Naive thymus-derived CD4-positive, alpha-beta T cell (primary cell): ENCODE measurements at regions of chr1 and their contacts with region 1.

Region 1: DNA sequence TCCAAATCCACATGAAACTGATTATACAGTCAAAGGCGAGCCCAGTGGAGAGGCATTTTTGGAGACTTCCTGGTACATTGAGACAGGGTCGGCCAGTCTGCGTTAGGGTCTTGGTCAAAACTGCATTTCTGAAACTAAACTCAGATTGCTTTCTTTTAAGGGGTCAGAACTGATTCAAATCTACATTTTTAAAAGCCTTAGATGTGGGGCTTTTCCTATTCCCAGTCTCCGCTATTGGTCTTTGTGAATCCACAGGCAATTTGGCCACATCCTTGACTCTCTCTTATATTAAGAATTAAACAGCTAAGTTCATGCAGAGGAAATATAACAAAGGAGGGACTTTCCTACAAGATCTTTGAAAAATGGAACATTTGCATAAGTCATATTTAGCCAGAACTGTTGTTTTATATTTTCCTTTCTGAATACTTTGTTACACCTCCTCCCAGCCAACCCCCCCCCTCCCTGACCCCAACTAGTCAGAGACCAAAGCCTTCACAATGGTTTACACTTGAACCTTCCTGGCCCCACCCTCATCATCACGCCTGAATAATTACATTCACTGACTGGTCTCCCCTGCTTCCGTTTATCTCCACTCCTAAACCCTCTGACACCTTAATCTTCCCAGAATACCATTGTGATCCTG is 30.9 kb downstream of the SELL start:
- DNase-seq: peak in 1 of 9 donors; percentile 38
- ATAC-seq: peak; percentile 49
- H3K4me3 ChIP-seq: no peak overlapping the region
- H3K4me3 Mint-ChIP-seq: peak overlapping the region; percentile 23 to 72 (median 53)
- H3K27ac ChIP-seq: no peak overlapping the region
- H3K27ac Mint-ChIP-seq: peak overlapping the region in 7 of 9 donors; percentile 40 to 89 (median 73)
- H3K4me1 ChIP-seq: peaks cover 24 to 72% of the 10 kb centered on the region in 2 donors
- H3K4me1 Mint-ChIP-seq: peaks cover 28 to 64% (median 39%) of the 10 kb centered on the region in 7 donors
- H3K27me3 ChIP-seq: no peaks in the 10 kb centered on the region
- H3K27me3 Mint-ChIP-seq: no peaks in the 10 kb centered on the region

Region 2: GRCh38 chr1:169648709-169649108 is 31.8 kb before region 1 on chr1:
- CTCF ChIA-PET with region 1: no interaction called
- POLR2A ChIA-PET with region 1: interaction called, 6 read pairs
- intact Hi-C with region 1: loop called in 1 of 2 experiments (anchors 1 kb)
- DNase-seq: no peak
- ATAC-seq: no peak
- H3K4me3 ChIP-seq: no peak overlapping the region
- H3K4me3 Mint-ChIP-seq: peak overlapping the region in 8 of 10 donors; percentile 10 to 74 (median 62)
- H3K27ac ChIP-seq: peak overlapping the region; percentile 17
- H3K27ac Mint-ChIP-seq: peak overlapping the region in 8 of 9 donors; percentile 65 to 94 (median 88)
- H3K4me1 ChIP-seq: peaks cover 14 to 28% of the 10 kb centered on the region in 2 donors
- H3K4me1 Mint-ChIP-seq: peaks cover 18 to 55% (median 46%) of the 10 kb centered on the region in 7 donors
- H3K27me3 ChIP-seq: no peaks in the 10 kb centered on the region
- H3K27me3 Mint-ChIP-seq: no peaks in the 10 kb centered on the region

Region 3: DNA sequence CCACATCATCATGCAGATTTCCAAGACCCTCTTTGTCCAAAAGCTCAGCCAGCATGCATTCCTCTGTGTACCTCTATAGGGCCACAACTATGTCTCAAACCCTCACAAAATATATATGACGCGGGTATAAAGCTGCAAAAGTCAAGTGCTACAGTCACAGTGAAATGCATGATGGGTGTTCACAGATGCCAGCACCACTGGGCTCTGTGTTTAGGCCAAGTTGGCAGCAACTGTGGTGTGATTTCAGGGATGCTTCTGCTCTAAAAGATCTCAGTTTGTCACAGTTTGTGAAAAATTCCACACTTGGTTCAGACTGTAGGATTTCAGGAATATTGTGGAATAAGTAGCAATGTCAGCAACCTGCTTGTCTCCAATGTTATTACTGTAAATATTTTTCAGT is 26.6 kb before region 1 on chr1:
- CTCF ChIA-PET with region 1: no interaction called
- POLR2A ChIA-PET with region 1: interaction called, 6 read pairs
- intact Hi-C with region 1: loop called in 1 of 2 experiments (anchors 1 kb)
- DNase-seq: no peak
- ATAC-seq: no peak
- H3K4me3 ChIP-seq: no peak overlapping the region
- H3K4me3 Mint-ChIP-seq: no peak overlapping the region
- H3K27ac ChIP-seq: no peak overlapping the region
- H3K27ac Mint-ChIP-seq: peak overlapping the region in 2 of 9 donors; percentile 57 to 59
- H3K4me1 ChIP-seq: peaks cover 17 to 26% of the 10 kb centered on the region in 2 donors
- H3K4me1 Mint-ChIP-seq: peaks cover 36 to 69% (median 57%) of the 10 kb centered on the region in 7 donors
- H3K27me3 ChIP-seq: no peaks in the 10 kb centered on the region
- H3K27me3 Mint-ChIP-seq: no peaks in the 10 kb centered on the region

Region 4: GRCh38 chr1:169892927-169893493 is 212.5 kb after region 1 on chr1:
- CTCF ChIA-PET with region 1: no interaction called
- POLR2A ChIA-PET with region 1: no interaction called
- intact Hi-C with region 1: no loop called
- DNase-seq: peak in 2 of 9 donors; percentile 18 to 33
- ATAC-seq: no peak
- H3K4me3 ChIP-seq: peak overlapping the region; percentile 77
- H3K4me3 Mint-ChIP-seq: peak overlapping the region; percentile 82 to 97 (median 92)
- H3K27ac ChIP-seq: peak overlapping the region; percentile 95
- H3K27ac Mint-ChIP-seq: peak overlapping the region; percentile 68 to 100 (median 98)
- H3K4me1 ChIP-seq: peaks cover 25 to 28% of the 10 kb centered on the region in 2 donors
- H3K4me1 Mint-ChIP-seq: peaks cover 30 to 58% (median 54%) of the 10 kb centered on the region in 7 donors
- H3K27me3 ChIP-seq: no peaks in the 10 kb centered on the region
- H3K27me3 Mint-ChIP-seq: peaks cover 0 to 14% (median 4%) of the 10 kb centered on the region in 5 donors

Region 5: DNA sequence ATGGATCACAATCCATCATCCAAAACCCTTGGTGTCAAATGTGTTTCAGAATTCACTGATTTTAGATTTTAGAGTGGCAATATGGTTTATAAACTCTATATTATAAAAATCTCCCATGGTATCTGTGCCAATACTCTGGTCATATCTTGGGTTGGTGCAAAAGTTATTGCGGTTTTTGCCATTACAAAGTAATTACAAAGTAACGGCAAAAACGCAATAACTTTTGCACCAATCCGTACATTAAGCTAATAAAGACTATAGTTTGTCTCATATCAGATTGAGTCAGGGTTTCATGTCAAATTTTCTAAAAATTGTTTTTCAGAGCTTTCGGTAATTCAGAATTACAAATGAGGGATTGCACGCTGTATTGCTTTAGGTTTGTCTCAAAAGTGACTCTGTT is 441.9 kb after region 1 on chr1:
- CTCF ChIA-PET with region 1: no interaction called
- POLR2A ChIA-PET with region 1: no interaction called
- intact Hi-C with region 1: no loop called
- DNase-seq: no peak
- ATAC-seq: no peak
- H3K4me3 ChIP-seq: no peak overlapping the region
- H3K4me3 Mint-ChIP-seq: no peak overlapping the region
- H3K27ac ChIP-seq: no peak overlapping the region
- H3K27ac Mint-ChIP-seq: no peak overlapping the region
- H3K4me1 ChIP-seq: no peaks in the 10 kb centered on the region
- H3K4me1 Mint-ChIP-seq: peaks cover 0 to 5% (median 0%) of the 10 kb centered on the region in 7 donors
- H3K27me3 ChIP-seq: no peaks in the 10 kb centered on the region
- H3K27me3 Mint-ChIP-seq: peaks cover 2 to 11% (median 9%) of the 10 kb centered on the region in 5 donors